H1 (cell line): ENCODE measurements at regions of chr2 and their contacts with region 1.

Region 1: DNA sequence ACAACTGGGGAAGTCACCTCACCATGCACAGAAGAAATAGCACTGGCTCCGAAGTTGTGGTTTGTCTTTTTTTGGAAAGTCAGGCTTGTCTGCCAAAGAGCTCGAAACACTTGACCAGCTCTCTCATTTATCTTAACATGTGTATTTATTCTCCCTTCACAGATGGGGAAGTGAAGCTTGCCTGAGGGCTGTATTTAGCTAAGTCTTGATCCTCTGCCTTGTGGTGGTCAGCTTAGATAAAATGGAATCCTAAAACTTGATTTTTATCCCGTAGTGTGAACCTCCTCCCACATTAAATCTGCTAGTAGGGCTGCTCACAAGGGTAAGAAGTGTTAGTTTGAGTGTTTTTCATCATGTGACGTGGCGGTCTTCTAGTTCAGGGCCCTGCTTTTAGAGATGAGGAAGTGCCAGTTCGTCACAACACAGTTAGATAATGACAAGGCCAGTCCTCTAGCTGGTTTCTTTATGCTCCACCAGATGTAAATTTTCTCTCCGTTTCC is 89.7 kb downstream of the TMEM247 start:
- DNase-seq: no peak
- H3K4me3 ChIP-seq: no peak overlapping the region
- H3K27ac ChIP-seq: no peak overlapping the region
- H3K4me1 ChIP-seq: no peaks in the 10 kb centered on the region
- H3K27me3 ChIP-seq: no peaks in the 10 kb centered on the region
- CTCF ChIP-seq: no peak
- EP300 ChIP-seq: no peak
- POLR2A ChIP-seq: no peak
- RAD21 ChIP-seq: no peak

Region 2: GRCh38 chr2:46547223-46548102 is 21.6 kb before region 1 on chr2:
- CTCF ChIA-PET with region 1: interaction called, 35 read pairs
- POLR2A ChIA-PET with region 1: interaction called, 4 read pairs
- DNase-seq: peak in 1 of 2 experiments; percentile 22
- H3K4me3 ChIP-seq: no peak overlapping the region
- H3K27ac ChIP-seq: no peak overlapping the region
- H3K4me1 ChIP-seq: peaks cover 0 to 2% (median 0%) of the 10 kb centered on the region in 4 experiments; a peak in 3 of 7 replicates
- H3K27me3 ChIP-seq: no peaks in the 10 kb centered on the region
- CTCF ChIP-seq: no peak
- EP300 ChIP-seq: no peak
- POLR2A ChIP-seq: no peak
- RAD21 ChIP-seq: no peak

Region 3: DNA sequence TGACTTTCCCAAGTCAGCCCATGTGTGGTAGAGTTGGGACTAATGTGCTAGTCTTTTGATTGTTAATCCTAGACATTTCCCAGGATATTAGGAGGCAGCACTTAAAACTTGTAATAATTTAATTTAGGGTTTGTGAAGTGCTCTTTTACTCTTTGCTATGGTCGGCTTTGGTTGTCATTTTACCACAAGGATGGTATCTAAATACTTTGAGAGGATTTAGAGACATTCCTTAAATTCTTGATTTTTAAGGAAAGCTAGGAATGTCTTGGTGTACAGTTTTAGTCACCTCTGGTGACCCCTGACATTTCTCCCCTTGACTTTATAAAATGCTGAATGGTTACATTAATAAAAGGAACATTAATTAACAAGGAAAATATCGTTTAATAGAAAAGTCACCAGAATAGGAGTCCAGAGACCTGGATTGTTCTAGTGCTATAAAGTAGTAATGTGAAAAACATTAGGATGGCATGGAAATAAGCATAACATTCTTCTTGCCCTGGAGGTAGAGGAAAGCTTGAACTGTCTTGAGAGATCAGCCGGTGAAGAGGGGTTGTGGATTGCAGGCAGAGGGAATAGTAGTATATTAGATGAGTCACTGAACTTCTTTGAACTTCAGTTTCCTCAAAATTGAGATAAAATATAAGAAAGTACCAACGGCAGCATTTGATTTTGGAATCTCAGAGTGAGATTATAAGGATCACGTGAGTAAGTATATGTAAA is 137.3 kb after region 1 on chr2:
- CTCF ChIA-PET with region 1: no interaction called
- POLR2A ChIA-PET with region 1: no interaction called
- DNase-seq: no peak
- H3K4me3 ChIP-seq: peak overlapping the region in 1 of 4 experiments; percentile 52; a peak in 1 of 8 replicates
- H3K27ac ChIP-seq: no peak overlapping the region
- H3K4me1 ChIP-seq: peaks cover 5 to 47% (median 16%) of the 10 kb centered on the region in 4 experiments
- H3K27me3 ChIP-seq: no peaks in the 10 kb centered on the region
- CTCF ChIP-seq: no peak
- EP300 ChIP-seq: no peak
- POLR2A ChIP-seq: no peak
- RAD21 ChIP-seq: no peak